GM10248 (cell line): ENCODE measurements at regions of chr20 and their contacts with region 1.

Region 1: DNA sequence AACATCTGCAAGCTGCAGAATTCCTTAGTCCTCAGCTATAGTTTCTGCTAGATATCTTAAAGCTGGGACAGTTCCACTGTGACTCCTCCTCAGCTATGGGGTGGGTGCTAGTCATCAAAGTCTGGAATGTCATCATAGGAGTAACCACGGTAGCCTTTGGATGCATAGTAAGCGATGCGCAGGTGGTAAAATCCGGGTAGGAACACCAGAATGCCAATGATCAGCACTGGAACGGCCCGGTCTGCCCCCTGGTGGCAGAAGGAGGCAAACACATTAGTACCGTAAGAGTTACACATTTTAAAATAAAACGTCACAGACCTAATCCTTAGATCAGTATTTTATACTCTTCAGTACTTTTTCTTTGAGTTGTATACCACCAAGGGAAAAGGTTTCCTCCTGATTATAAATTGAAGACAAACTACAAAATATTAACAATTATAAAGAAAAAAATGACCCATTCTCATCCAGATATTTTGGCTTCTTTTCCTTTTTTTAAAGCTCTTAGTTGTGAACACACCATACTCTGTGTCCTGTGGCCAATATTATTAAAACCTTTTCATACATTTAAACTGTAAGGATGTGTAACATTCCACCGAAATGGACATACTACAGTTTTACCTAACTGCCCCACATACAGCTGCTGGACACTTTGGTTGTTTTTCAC is 18.9 kb downstream of the PCNA start:
- DNase-seq: peak; percentile 63
- CTCF ChIP-seq: peak; percentile 84

Region 2: DNA sequence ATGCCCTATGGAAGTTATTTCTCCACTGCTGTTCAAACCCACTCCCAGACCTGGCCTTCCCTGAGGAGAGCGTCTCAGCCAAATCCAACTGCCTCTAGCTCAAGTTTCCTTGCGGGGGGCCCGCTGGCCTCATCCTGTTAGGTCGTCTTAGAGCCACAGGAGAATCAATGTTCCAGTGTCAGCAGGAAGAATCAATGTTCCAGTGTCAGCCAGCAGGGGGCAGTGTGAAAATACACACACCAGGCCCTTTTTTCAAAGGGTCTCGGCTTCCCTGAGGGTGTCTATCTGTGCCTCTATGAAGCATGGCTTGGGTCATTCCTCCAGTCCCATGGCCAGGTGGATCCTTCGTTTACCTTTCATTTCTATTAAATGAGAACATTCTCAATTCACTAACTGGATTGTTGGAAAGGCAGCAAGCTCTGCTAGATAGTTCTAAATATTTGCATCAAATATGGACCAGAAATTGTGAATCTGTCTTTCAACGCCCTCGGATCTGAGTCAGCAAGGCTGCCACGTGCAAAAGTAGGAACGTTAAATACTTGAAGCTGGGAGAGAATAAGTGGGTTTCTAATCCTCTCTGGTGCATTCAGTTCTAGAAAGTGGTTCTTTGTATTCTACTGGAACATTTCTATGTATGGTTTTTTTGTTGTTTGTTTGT is 359.9 kb before region 1 on chr20:
- CTCF ChIA-PET with region 1: interaction called, 17 read pairs
- POLR2A ChIA-PET with region 1: no interaction called
- DNase-seq: peak; percentile 59
- CTCF ChIP-seq: peak; percentile 81

Region 3: DNA sequence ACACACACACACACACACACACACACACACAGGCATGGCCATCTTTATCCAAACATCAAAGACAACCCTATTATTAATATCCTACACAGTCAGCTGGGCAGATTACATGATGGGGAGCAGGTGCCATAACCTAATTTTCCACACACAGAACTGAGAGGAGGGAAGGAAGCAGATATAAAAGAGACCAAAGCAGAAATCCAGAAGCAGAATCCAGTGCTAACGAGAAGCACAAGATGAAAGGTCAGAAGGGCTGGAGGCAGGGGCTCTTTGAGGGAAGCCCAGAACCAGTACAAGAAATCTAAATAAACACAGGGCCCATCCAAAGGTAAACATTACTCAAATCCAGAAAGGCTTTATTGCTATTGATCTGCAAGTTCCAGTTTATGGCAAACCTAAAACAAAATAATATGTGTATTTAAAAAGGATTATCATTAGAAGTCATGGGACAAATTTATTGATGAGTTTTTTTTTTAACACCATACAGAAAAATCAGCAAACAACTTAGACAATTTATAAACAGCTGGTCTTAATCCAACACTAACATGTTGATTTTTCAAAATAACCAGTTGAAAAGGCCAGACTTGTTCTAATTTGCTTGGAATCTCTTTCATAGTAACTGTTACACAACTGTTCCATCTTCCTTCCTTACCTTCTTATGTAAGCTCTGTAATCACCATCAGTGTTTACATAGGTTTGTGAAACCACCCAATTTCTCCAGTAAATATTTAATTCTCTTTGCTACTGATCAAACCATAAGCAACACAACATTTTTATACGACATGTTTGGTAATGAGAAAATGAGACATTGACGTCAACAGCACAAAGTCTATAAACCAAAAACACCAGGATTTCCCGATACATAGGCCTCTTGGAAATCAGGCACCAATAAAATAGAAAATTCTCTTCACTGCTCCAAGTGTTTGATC is 133.7 kb before region 1 on chr20:
- CTCF ChIA-PET with region 1: interaction called, 13 read pairs
- POLR2A ChIA-PET with region 1: no interaction called
- DNase-seq: no peak
- CTCF ChIP-seq: no peak

Region 4: GRCh38 chr20:5056801-5057599 is 43.8 kb before region 1 on chr20:
- CTCF ChIA-PET with region 1: interaction called, 27 read pairs
- POLR2A ChIA-PET with region 1: no interaction called
- DNase-seq: peak; percentile 64
- CTCF ChIP-seq: peak; percentile 33

Region 5: DNA sequence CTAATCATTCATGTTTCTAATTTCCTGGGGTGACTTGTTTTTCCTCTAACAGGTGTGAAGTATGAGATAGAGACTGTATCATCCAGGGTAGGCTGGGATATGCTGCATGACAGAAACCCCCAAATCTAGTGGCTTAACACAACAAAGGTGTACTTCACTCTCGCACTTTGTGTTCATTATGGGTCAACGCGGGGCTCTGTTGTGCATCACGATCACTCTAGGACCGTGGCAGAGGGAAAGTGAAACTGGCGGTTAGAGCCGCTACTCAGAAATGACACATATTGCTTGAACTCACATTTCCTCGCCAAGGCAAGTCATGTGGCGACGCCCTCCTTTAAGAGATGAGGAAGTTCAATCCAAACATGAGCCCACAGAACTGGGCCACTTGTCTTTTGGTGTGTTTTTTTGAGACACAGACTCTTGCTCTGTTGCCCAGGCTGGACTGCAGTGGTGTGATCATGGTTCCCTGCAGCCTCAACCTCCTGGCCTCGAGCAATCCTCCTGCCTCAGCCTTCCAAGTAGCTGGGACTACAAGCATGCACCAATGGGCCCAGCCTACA is 22.3 kb before region 1 on chr20:
- CTCF ChIA-PET with region 1: interaction called, 77 read pairs
- POLR2A ChIA-PET with region 1: no interaction called
- DNase-seq: peak; percentile 87
- CTCF ChIP-seq: no peak

Region 6: GRCh38 chr20:5090191-5090590 is 10.6 kb before region 1 on chr20:
- CTCF ChIA-PET with region 1: interaction called, 77 read pairs
- POLR2A ChIA-PET with region 1: no interaction called
- DNase-seq: peak; percentile 48
- CTCF ChIP-seq: no peak

Region 7: GRCh38 chr20:5119435-5120188 is 18.8 kb after region 1 on chr20 and contains the start of gene PCNA:
- CTCF ChIA-PET with region 1: interaction called, 10 read pairs
- POLR2A ChIA-PET with region 1: no interaction called
- DNase-seq: peak; percentile 96
- CTCF ChIP-seq: no peak